ENCODE measurements at regions of chr17 and their contacts with region 1.

Region 1: GRCh38 chr17:77957857-77958715 is at the start of gene TNRC6C:
- DNase-seq: peak; percentile 99
- ATAC-seq: peak; percentile 85
- H3K4me3 Mint-ChIP-seq: peak within 1 kb of the TSS; percentile 98
- H3K27ac Mint-ChIP-seq: peak within 1 kb of the TSS; percentile 95
- H3K4me1 Mint-ChIP-seq: peaks cover 30% of the 10 kb centered on the region
- H3K27me3 Mint-ChIP-seq: peaks cover 28% of the 10 kb centered on the region
- total RNA-seq, gene TNRC6C: 74.7 TPM

Region 2: DNA sequence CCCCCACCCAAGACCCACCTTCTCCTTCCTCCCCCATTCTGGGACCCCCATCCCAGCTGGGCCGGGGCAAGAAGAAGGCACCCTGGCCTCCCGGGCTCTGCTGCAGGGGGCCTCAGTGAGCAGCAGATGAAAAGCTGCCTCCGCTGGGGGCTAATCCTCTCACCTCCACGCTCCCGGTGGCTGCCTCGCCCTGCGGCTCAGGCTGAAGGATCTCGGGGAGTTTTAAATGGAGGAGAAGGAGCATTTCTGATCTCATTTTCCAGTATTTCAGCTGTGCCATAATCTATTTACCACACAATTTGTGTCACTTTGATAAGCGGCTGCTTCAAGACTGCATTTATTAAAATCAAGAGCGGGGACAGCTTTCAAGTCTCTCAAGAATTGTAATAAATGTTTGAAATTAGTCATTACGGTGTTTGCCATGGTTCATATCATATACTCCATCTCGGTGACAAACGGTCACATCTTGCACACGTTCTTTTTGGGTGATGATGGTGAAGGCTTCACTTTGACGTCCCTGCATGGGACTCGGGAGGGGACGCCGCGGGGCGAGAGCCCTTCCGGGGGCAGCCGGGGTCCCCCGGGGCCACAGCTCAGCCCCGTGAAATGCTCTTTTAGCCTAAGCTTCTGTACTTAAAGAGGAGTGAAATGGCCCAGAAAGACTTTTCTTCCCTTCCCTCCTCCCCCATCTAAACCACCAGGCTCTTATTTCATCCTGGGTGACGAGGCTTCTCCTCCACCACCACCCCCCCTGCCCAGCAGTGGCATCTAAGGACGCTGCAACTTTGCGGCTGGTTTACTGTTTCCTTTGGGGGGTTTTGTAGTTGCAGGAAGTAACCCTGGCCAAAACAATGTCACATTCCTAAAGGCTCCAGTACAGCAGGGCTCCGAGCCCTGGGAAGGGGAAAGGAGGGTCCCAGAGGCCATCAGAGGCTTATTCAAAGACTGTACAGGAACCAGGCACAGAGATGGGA is 312.7 kb before region 1 on chr17:
- POLR2A ChIA-PET with region 1: interaction called, 13 read pairs
- DNase-seq: peak; percentile 63
- ATAC-seq: peak; percentile 77
- H3K4me3 Mint-ChIP-seq: peak overlapping the region; percentile 73
- H3K27ac Mint-ChIP-seq: peak overlapping the region; percentile 93
- H3K4me1 Mint-ChIP-seq: peaks cover 24% of the 10 kb centered on the region
- H3K27me3 Mint-ChIP-seq: peaks cover 17% of the 10 kb centered on the region

Region 3: DNA sequence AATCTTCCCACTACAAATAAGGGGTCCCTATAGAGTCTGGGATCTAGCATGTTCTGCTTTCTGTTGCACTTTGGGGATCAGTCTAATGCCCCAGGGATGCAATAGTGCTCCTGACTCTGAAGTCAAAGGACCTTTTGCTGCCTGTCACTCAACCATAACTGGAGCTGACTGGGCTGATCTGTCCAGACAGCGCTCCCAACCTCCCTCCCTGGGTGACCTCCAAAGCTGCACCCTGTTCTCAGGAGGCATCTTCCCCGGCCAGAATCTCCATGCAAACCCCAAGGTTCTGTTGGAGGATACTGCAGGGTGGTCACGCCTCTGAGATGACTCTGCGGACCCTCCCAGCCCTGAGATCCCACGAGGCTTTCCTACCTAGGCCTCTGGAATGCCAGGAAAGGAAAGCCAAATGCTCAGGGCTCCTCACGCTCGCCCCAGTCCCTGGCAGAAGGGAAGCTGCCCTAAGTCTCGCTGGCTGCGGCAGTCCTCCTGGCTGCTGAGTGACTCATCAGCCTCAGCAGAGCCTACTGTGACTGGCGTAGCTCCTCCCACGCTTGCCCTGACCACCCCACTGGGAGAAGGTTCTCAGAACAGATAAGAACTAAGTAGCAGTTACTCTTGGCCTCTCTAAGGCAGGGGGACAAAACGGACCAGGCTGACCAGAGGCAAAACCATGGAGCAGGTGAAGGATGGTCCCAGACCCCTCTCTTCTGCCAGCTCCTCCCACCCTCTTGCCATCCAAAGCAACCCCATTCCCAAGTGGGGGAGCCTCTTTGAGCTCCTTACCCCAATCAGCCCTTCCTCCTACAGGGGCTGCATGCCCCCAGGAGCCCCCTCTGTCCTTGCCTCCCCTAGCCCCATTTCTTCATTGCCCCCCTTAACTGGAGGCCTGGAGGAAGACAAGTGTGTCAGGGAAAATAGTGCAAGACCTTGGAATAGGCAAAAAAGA is 123.6 kb before region 1 on chr17:
- POLR2A ChIA-PET with region 1: interaction called, 12 read pairs
- DNase-seq: peak; percentile 56
- ATAC-seq: peak; percentile 98
- H3K4me3 Mint-ChIP-seq: peak overlapping the region; percentile 27
- H3K27ac Mint-ChIP-seq: no peak overlapping the region
- H3K4me1 Mint-ChIP-seq: peaks cover 19% of the 10 kb centered on the region
- H3K27me3 Mint-ChIP-seq: peaks cover 20% of the 10 kb centered on the region

Region 4: GRCh38 chr17:77881545-77881944 is 76.5 kb before region 1 on chr17:
- POLR2A ChIA-PET with region 1: interaction called, 57 read pairs
- DNase-seq: peak; percentile 82
- ATAC-seq: peak; percentile 74
- H3K4me3 Mint-ChIP-seq: peak overlapping the region; percentile 87
- H3K27ac Mint-ChIP-seq: peak overlapping the region; percentile 99
- H3K4me1 Mint-ChIP-seq: peaks cover 38% of the 10 kb centered on the region
- H3K27me3 Mint-ChIP-seq: peaks cover 5% of the 10 kb centered on the region

Region 5: DNA sequence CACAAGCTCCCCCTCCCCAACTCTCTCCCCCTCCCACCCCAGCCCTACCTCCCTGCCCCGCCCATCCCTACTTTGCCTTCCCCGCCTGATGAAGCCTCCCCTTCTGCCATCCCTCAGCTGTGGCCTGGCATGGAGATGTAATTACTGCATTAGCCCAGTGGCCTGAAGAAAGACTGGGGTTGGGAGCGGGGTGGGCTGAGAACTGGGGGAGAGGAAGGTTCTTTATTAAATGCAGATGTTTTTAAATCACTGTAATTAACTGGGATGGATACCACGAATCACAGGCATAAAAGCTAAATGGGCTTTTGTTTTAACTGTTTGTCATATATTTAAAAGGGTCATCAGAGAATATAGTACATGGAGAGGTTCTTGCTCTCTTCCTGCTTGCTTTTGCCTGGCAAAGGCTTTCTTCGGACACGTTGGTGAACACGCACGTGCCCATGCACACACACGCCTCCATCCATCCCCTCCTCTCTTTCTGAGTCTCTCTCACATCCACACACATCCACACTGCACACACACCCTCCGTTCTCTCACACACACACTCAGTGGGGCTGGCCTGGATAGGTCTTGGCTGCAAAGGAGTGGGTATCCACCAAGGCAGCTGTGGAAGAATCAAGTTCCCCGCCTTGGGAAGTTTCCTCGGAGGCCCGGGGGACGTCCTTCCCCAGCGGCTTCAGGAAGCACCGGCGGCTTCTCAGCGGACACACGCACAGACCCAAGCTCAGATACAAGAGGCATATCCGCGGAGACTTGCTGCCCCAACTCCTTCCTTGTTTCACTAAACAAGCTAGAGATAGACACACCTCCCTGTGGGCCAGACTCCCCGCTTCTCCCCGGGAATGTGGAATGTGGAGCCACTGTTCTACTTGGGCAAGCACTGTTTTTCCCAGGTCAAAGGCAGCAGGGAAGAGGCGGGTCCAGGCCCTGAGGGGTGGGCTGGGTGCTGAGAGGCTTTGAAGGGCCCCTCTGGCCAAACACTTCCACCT is 27.0 kb before region 1 on chr17:
- POLR2A ChIA-PET with region 1: interaction called, 16 read pairs
- DNase-seq: no peak
- ATAC-seq: no peak
- H3K4me3 Mint-ChIP-seq: no peak overlapping the region
- H3K27ac Mint-ChIP-seq: no peak overlapping the region
- H3K4me1 Mint-ChIP-seq: peaks cover 18% of the 10 kb centered on the region
- H3K27me3 Mint-ChIP-seq: peaks cover 12% of the 10 kb centered on the region

Region 6: GRCh38 chr17:77942112-77942988 is 15.7 kb before region 1 on chr17:
- POLR2A ChIA-PET with region 1: no interaction called
- DNase-seq: no peak
- ATAC-seq: no peak
- H3K4me3 Mint-ChIP-seq: no peak overlapping the region
- H3K27ac Mint-ChIP-seq: no peak overlapping the region
- H3K4me1 Mint-ChIP-seq: no peaks in the 10 kb centered on the region
- H3K27me3 Mint-ChIP-seq: peaks cover 15% of the 10 kb centered on the region

Region 7: GRCh38 chr17:78013683-78014467 is 55.8 kb after region 1 on chr17:
- POLR2A ChIA-PET with region 1: interaction called, 18 read pairs
- DNase-seq: no peak
- ATAC-seq: peak; percentile 69
- H3K4me3 Mint-ChIP-seq: no peak overlapping the region
- H3K27ac Mint-ChIP-seq: no peak overlapping the region
- H3K4me1 Mint-ChIP-seq: peaks cover 17% of the 10 kb centered on the region
- H3K27me3 Mint-ChIP-seq: no peaks in the 10 kb centered on the region